B cell (primary cell): ENCODE measurements at regions of chr11 and their contacts with region 1.

Region 1: DNA sequence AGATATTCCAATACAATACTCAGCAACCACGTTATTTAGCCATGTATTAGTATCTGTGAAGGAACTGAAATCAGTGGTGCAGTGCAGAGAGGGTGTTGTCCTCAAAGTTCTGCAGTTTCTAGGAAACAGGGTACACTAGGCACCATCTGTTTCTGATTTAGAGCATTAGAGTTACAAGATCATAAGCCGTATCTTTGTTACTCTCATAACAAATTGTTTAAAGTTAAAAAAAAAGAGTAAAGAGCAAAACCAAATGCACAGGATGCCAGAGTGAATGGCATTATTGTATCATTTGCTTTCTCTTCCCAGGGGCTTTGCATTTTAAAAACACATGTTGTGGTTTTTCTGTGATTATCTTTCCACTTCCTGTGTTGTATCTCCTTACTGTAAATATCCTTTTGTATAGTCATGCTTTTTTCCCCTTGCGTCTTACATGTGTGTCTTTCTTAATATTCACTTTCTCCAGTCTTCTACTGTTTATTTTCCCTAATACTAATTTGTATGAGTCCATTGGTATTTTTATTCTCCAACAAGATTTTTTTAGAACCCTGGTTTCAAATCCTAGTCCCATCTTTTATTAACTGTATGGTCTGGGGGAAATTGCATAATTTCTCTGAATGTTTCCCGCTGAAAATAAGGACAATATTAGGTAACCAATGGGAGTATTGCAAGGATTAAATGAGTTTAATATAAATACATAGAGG is 15.2 kb upstream of the NUP160 start:
- DNase-seq: peak; percentile 82
- ATAC-seq: peak; percentile 81
- H3K4me3 ChIP-seq: peak overlapping the region in 1 of 5 experiments; percentile 52
- H3K4me3 Mint-ChIP-seq: peak overlapping the region; percentile 46
- H3K27ac ChIP-seq: peak overlapping the region; percentile 77 to 78
- H3K27ac Mint-ChIP-seq: peak overlapping the region; percentile 85
- H3K4me1 ChIP-seq: peaks cover 72 to 81% of the 10 kb centered on the region in 2 donors
- H3K4me1 Mint-ChIP-seq: peaks cover 63% of the 10 kb centered on the region
- H3K27me3 ChIP-seq: no peaks in the 10 kb centered on the region
- H3K27me3 Mint-ChIP-seq: no peaks in the 10 kb centered on the region
- CTCF ChIP-seq: no peak

Region 2: DNA sequence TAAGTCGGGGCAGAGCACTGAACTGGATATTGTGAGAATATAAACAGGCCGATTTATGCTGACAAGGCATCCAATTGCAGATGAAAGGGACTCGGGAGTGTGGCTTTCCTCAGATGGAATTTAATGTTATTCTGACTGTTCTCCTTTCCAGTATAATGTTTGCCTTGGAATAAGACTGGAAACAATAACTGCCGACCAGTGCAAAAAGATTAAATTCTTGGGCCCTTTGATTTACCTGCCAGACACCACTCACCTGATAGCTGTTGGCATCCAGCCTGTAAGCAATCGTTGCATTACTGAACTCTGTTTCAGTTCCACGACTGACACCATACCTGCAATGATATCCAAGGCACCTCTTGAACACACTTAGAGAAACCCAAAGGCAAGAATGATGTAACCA is 26.0 kb before region 1 on chr11:
- CTCF ChIA-PET with region 1: no interaction called
- POLR2A ChIA-PET with region 1: no interaction called
- intact Hi-C with region 1: no loop called
- DNase-seq: no peak
- ATAC-seq: no peak
- H3K4me3 ChIP-seq: no peak overlapping the region
- H3K4me3 Mint-ChIP-seq: no peak overlapping the region
- H3K27ac ChIP-seq: no peak overlapping the region
- H3K27ac Mint-ChIP-seq: no peak overlapping the region
- H3K4me1 ChIP-seq: no peaks in the 10 kb centered on the region
- H3K4me1 Mint-ChIP-seq: no peaks in the 10 kb centered on the region
- H3K27me3 ChIP-seq: no peaks in the 10 kb centered on the region
- H3K27me3 Mint-ChIP-seq: no peaks in the 10 kb centered on the region
- CTCF ChIP-seq: no peak

Region 3: DNA sequence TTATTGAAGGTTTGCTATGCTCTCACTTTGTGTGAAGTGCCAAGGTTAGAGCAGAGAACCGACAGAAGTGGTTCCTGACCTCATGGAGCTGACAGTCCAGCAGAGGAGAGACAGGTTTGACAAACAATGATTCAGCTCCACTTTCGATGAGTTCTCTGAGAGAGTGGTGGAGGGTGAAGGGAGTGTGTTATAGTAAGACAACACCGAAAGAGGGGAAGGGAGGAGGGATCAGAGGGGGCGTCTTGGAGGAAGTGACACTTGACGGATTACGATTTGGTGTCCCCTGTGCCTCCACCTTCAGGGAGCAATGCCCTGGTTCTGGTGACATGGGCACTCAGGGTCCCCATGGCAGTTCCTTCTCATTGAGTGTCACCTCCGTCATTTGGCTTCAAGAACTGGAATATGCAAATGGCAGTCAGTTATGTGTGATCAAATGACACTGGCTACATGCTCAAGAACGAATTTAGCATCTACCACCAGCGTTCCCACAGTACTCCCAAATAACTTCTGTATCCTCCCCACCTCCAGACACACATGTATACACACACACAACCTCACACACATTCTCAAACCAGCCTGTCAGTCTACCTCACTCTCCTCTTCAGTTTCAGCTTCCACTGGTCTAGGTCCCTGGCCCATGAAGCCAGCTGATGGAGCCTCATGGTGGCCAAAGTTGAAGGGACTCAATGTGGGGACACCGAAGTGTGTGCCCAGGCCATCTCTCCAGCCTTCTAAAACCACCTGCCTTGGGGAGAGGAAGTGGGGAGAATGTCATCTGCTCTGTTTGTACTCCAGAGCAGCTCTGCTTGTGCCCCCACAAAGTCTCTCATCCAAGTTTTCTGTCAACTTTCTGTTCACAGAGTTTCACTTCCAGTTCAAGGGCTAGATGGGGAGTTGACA is 16.2 kb after region 1 on chr11:
- CTCF ChIA-PET with region 1: interaction called, 5 read pairs
- POLR2A ChIA-PET with region 1: interaction called, 5 read pairs
- intact Hi-C with region 1: loop called (anchors 2 kb)
- DNase-seq: peak; percentile 62
- ATAC-seq: peak; percentile 58
- H3K4me3 ChIP-seq: no peak overlapping the region
- H3K4me3 Mint-ChIP-seq: peak overlapping the region; percentile 37
- H3K27ac ChIP-seq: peak overlapping the region; percentile 67 to 75
- H3K27ac Mint-ChIP-seq: peak overlapping the region; percentile 75
- H3K4me1 ChIP-seq: peaks cover 20 to 25% of the 10 kb centered on the region in 2 donors
- H3K4me1 Mint-ChIP-seq: peaks cover 32% of the 10 kb centered on the region
- H3K27me3 ChIP-seq: no peaks in the 10 kb centered on the region
- H3K27me3 Mint-ChIP-seq: no peaks in the 10 kb centered on the region
- CTCF ChIP-seq: no peak

Region 4: DNA sequence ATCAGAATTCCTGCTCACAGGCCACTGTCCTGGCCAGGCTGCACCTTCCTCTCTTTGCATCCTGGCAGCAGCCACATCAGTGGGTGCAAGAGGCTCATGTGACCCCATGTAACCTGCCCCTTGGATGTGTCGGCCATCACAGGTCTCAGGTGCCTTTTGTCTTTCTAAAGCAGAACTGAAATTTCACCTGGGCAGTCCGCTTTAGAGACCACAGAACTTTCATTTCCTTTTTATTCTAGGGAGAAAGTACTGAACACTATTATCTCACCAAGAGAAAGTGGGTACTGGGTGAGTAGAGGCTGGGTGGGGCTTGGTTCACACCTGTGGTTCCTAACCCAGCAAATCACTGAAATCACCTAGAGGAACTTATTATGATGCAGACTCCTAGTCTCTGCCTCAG is 36.5 kb after region 1 on chr11:
- CTCF ChIA-PET with region 1: interaction called, 4 read pairs
- POLR2A ChIA-PET with region 1: interaction called, 5 read pairs
- intact Hi-C with region 1: loop called (anchors 1 kb)
- DNase-seq: peak; percentile 91
- ATAC-seq: peak; percentile 93
- H3K4me3 ChIP-seq: no peak overlapping the region
- H3K4me3 Mint-ChIP-seq: peak overlapping the region; percentile 61
- H3K27ac ChIP-seq: peak overlapping the region; percentile 76 to 88
- H3K27ac Mint-ChIP-seq: peak overlapping the region; percentile 96
- H3K4me1 ChIP-seq: peaks cover 33 to 38% of the 10 kb centered on the region in 2 donors
- H3K4me1 Mint-ChIP-seq: peaks cover 38% of the 10 kb centered on the region
- H3K27me3 ChIP-seq: no peaks in the 10 kb centered on the region
- H3K27me3 Mint-ChIP-seq: no peaks in the 10 kb centered on the region
- CTCF ChIP-seq: no peak

Region 5: GRCh38 chr11:48193876-48194275 is 330.5 kb after region 1 on chr11:
- CTCF ChIA-PET with region 1: no interaction called
- POLR2A ChIA-PET with region 1: no interaction called
- intact Hi-C with region 1: no loop called
- DNase-seq: no peak
- ATAC-seq: no peak
- H3K4me3 ChIP-seq: no peak overlapping the region
- H3K4me3 Mint-ChIP-seq: no peak overlapping the region
- H3K27ac ChIP-seq: no peak overlapping the region
- H3K27ac Mint-ChIP-seq: no peak overlapping the region
- H3K4me1 ChIP-seq: no peaks in the 10 kb centered on the region
- H3K4me1 Mint-ChIP-seq: no peaks in the 10 kb centered on the region
- H3K27me3 ChIP-seq: peaks cover 0 to 9% (median 3%) of the 10 kb centered on the region in 4 experiments
- H3K27me3 Mint-ChIP-seq: peaks cover 37% of the 10 kb centered on the region
- CTCF ChIP-seq: no peak